ENCODE measurements at regions of chr5 and their contacts with region 1.

Region 1: DNA sequence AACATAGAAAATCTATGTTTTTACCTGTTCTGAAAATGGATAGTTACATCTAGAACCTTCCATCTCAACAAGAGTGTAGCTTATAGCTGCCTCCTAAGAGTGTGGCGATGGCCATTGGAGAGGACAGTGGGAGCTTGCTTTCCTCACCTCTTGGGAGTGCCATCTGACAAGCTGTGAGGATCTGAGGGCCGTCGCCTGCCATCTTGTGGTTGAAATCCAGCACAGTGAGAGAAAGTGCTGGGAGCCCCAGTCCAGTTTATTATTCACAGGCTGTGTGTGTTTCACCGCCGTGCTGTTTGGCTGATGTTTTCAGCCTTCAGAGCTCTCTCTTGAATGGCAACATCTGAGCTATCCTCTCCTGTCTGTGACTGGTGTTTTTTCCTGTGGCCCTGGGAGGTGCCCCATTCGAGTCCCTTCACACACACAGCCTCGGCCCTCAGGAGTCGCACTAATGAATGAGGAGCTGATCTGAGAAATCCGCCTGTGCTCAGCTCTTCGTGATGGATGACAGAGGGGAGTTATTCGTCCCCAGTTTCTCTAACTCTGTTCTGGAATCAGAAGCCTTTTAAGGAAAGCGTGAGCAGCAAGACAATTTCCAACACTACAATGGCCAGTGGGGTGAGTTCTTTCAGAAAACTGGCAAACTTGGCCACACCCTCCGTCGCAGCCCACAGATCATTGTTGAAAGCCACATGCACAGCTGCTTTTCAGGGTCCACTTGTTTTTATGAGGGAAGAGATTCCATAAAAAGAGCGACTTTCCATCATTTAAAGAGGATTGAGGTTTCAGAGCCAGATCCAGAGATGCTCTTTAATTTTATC is 170.3 kb downstream of the PDZD2 start:
- H3K4me3 ChIP-seq: no peak overlapping the region
- H3K27ac ChIP-seq: no peak overlapping the region
- H3K4me1 ChIP-seq: no peaks in the 10 kb centered on the region
- CTCF ChIP-seq: peak; percentile 90

Region 2: GRCh38 chr5:31581498-31582099 is 227.7 kb before region 1 on chr5:
- CTCF ChIA-PET with region 1: interaction called, 28 read pairs
- POLR2A ChIA-PET with region 1: no interaction called
- H3K4me3 ChIP-seq: no peak overlapping the region
- H3K27ac ChIP-seq: no peak overlapping the region
- H3K4me1 ChIP-seq: no peaks in the 10 kb centered on the region
- CTCF ChIP-seq: no peak

Region 3: GRCh38 chr5:31593387-31594092 is 215.7 kb before region 1 on chr5:
- CTCF ChIA-PET with region 1: interaction called, 15 read pairs
- POLR2A ChIA-PET with region 1: no interaction called
- H3K4me3 ChIP-seq: no peak overlapping the region
- H3K27ac ChIP-seq: no peak overlapping the region
- H3K4me1 ChIP-seq: no peaks in the 10 kb centered on the region
- CTCF ChIP-seq: no peak

Region 4: DNA sequence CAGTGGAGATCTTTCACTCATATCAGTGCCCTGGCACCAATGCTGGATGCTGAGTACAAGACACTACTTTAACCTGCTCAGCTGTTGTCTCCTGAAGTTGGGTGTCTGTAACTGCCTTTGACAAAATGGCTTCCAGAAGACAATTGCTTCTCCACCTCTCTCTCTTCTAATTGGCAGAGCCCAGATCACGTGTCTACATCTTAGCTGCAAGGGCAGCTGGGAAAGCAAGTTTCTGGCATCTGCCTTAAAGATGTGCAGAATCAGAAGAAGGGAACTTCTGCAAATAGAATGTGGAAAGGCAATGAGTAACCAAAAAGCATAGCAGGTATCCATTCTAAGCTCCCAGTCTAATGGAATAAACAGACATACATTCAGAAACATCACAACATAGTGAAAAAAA is 89.3 kb before region 1 on chr5:
- CTCF ChIA-PET with region 1: no interaction called
- POLR2A ChIA-PET with region 1: no interaction called
- H3K4me3 ChIP-seq: no peak overlapping the region
- H3K27ac ChIP-seq: no peak overlapping the region
- H3K4me1 ChIP-seq: no peaks in the 10 kb centered on the region
- CTCF ChIP-seq: no peak

Region 5: DNA sequence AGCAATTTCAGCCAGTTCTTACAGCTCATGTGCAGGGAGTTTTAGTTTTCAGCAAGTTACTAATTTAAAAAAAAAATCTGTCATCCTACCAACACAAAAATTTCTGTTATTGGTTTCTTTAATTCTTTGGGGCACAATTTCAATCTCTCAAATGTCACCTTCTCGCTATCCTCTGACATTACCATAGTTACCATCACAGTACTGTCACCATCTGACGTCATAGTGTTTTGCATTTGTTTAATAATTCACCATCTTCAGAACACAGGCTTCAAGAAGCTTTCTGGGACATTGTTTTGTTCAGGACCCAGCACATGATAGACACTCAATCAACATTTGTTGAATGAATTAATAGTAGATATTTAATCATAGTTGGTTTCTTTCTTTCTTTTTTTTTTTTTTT is 15.3 kb before region 1 on chr5:
- CTCF ChIA-PET with region 1: interaction called, 24 read pairs
- POLR2A ChIA-PET with region 1: no interaction called
- H3K4me3 ChIP-seq: no peak overlapping the region
- H3K27ac ChIP-seq: no peak overlapping the region
- H3K4me1 ChIP-seq: no peaks in the 10 kb centered on the region
- CTCF ChIP-seq: no peak

Region 6: DNA sequence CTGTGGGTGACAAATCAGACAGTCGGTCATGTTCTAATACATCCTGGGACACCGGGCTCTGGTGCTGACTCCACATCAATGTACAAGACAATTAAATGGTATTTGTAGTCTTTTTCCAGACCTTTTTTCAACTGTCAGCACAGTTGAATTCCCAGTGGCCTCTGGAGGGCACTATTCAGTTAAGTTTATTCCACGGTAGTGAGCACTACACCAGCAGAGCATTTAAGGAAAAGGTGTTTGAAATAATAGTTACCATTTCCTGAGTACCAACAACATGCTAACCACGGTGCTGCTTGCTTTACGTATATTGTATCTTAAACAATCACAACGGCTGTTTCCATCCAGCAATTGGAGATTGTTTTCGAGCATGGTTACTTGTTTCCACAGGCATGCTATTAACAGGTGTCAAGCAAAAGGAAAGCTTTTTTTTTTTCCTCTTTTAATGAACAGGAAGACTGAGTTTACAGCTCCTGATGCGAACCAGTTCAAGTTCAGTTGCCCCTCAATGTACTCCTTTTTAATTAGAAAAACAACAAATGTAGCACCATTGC is 16.3 kb after region 1 on chr5:
- CTCF ChIA-PET with region 1: interaction called, 26 read pairs
- POLR2A ChIA-PET with region 1: no interaction called
- H3K4me3 ChIP-seq: no peak overlapping the region
- H3K27ac ChIP-seq: no peak overlapping the region
- H3K4me1 ChIP-seq: peaks cover 10% of the 10 kb centered on the region; the same call in 1 of the 2 replicates
- CTCF ChIP-seq: peak; percentile 68

Region 7: DNA sequence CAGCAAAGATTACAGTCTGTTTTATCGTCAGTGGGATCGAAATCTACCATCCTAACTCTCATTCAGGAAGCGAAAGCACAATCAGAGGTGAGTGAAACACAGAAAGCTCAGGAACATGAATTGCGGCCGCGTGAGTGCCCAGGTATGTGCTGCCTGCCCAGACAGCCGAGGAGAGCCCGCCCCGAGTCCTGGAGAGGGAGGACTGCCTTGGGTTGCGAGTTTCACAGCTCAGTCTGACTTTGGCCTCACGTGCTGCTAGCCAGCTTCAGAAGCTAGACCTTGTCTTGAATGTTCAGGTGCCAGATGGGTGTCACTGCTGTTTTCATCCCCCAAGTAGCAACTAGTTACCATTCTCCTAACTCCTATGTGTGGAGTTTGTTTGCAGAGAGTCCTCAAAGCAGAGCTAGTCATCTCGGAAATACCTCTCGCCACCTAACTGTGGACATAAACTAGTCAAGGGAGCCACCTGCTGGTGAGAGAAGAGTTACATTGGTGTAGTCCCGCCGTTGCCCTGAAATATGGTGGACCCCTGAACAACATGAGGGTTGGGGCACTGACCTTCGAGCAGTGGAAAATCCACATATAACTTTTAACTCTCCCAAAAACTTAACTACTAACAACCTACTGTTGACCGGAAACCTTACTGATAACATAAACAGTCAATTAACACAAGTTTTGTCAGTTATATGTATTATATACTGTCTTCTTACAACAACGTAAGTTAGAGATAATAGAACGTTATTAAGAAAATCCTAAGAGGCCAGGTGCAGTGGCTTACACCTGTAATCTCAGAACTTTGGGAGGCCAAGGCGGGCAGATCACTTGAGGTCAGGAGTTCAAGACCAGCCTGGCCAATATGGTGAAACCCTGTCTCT is 283.9 kb after region 1 on chr5:
- CTCF ChIA-PET with region 1: interaction called, 22 read pairs
- POLR2A ChIA-PET with region 1: no interaction called
- H3K4me3 ChIP-seq: no peak overlapping the region
- H3K27ac ChIP-seq: no peak overlapping the region
- H3K4me1 ChIP-seq: no peaks in the 10 kb centered on the region
- CTCF ChIP-seq: peak; percentile 91